PC-9 (cell line): ENCODE measurements at regions of chr7 and their contacts with region 1.

Region 1: GRCh38 chr7:106914018-106914607 is 49.0 kb downstream of the PIK3CG start:
- DNase-seq: no peak
- H3K4me3 ChIP-seq: no peak overlapping the region
- H3K27ac ChIP-seq: no peak overlapping the region
- H3K4me1 ChIP-seq: no peaks in the 10 kb centered on the region
- H3K27me3 ChIP-seq: no peaks in the 10 kb centered on the region
- CTCF ChIP-seq: no peak

Region 2: DNA sequence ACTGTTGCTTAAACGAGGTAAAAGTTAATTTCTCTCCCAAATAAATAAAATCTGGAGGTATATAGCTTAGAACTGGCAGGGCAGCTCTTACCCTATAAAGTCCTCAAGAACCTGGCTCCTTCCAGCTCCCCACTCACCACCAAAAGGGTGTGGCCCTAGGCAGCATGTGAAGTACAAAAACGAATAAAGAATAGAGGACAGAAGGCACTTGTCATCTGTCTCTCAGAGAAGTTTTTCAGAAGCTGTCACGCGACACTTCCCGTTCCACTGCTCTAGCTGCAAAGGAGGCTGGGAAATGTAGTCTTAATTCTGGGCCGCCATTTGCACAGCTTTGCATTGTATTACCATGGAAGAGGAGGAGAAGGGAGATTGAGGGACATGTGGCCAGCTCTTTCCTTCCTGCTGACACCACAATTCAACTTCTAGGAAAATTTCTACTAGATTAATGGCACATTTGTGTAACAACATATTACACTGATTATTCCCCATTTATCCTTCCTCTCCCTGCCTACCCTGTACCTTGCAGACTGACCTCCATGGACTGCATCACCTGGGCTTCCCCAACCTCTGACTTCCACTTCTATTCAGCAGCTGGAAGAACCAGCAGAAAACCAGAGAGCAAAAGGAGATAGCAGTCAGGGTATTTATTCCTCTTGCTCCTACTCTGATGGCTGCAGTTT is 315.3 kb before region 1 on chr7:
- CTCF ChIA-PET with region 1: no interaction called
- POLR2A ChIA-PET with region 1: interaction called, 14 read pairs
- intact Hi-C with region 1: no loop called
- DNase-seq: peak; percentile 40 to 50
- H3K4me3 ChIP-seq: peak overlapping the region; percentile 45; the same call in 1 of the 2 replicates
- H3K27ac ChIP-seq: no peak overlapping the region
- H3K4me1 ChIP-seq: no peaks in the 10 kb centered on the region; the same call in 1 of the 2 replicates
- H3K27me3 ChIP-seq: no peaks in the 10 kb centered on the region
- CTCF ChIP-seq: no peak